Right lobe of liver (tissue), 6 donors: ENCODE measurements at regions of chr11 and their contacts with region 1.

Region 1: GRCh38 chr11:78659326-78660270 is 84.9 kb upstream of the NARS2 start:
- DNase-seq: peak; percentile 66 to 81 (median 69)
- ATAC-seq: peak; percentile 92 to 99 (median 97)
- H3K4me3 ChIP-seq: no peak overlapping the region
- H3K27ac ChIP-seq: no peak overlapping the region
- H3K4me1 ChIP-seq: peaks cover 0 to 4% (median 0%) of the 10 kb centered on the region in 4 donors
- H3K27me3 ChIP-seq: no peaks in the 10 kb centered on the region
- CTCF ChIP-seq: no peak
- POLR2A ChIP-seq: no peak

Region 2: DNA sequence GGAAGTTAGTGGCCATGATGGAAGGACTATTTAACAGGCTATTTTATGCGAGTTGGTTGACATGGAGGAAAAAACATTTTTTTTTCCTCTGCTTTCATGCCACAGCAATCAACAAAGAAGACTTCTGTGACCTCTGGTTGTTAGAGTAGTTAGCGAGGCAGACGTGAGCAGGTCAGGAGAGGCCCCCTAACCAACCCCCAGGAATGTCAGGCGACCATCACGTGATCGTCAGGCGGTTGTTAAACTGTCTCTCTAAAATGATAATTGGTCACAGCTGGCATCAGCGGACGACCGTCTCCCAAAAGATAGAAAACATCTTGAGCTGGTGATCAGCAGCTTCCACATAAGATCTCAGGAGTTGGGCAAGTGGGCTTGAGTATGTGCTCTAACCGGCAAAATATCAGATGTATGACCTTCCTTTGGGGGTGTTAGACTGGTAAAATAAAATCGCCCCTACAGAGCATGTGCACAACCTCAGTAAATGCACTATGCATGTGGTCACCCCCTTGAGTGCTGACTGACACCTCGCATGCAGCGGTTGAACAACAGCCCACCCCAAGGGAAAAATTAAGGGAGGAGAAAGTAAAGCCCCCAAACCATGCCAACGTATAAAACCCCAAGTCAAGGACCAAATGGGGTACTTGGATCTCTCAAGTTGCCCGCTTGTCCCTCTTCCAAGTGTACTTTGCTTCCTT is 64.0 kb before region 1 on chr11:
- intact Hi-C with region 1: no loop called
- DNase-seq: no peak
- ATAC-seq: no peak
- H3K4me3 ChIP-seq: no peak overlapping the region
- H3K27ac ChIP-seq: no peak overlapping the region
- H3K4me1 ChIP-seq: peaks cover 0 to 3% (median 0%) of the 10 kb centered on the region in 4 donors
- H3K27me3 ChIP-seq: no peaks in the 10 kb centered on the region
- CTCF ChIP-seq: no peak
- POLR2A ChIP-seq: no peak

Region 3: GRCh38 chr11:78715639-78716311 is 56.2 kb after region 1 on chr11:
- intact Hi-C with region 1: loop called in 1 of 2 experiments (anchors 10 kb)
- DNase-seq: peak; percentile 58 to 68 (median 63)
- ATAC-seq: peak; percentile 67 to 85 (median 84)
- H3K4me3 ChIP-seq: no peak overlapping the region
- H3K27ac ChIP-seq: no peak overlapping the region
- H3K4me1 ChIP-seq: no peaks in the 10 kb centered on the region
- H3K27me3 ChIP-seq: no peaks in the 10 kb centered on the region
- CTCF ChIP-seq: peak; percentile 65 to 82 (median 74)
- POLR2A ChIP-seq: no peak

Region 4: DNA sequence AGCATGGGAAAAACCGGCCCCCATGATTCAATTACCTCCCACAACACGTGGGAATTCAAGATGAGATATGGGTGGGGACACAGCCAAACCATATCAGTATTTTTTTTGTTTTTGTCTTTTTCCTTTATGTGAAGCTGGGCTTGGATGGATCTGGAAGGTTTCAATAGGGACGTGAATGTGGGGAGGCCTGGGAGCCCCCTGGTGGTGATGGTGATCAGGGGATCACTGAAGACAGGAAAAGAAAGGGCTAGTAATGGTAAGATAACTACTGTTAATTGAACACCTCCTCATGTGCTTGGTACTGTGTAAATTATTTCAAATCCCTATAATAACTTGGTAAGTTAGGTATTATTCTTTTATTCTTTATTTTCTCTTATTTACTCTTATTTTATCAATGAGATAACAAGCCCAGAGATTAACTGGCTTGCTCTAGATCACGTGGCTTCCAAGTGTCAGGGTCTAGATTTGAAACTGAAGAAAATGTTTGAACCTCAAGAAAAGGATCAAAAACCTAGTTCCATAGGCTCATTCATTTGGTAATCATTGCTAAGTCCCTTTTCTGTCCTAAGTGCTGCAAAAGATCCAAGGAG is 417.0 kb after region 1 on chr11:
- intact Hi-C with region 1: loop called (anchors 10 kb)
- DNase-seq: peak; percentile 63 to 67 (median 65)
- ATAC-seq: peak; percentile 85 to 93 (median 86)
- H3K4me3 ChIP-seq: no peak overlapping the region
- H3K27ac ChIP-seq: no peak overlapping the region
- H3K4me1 ChIP-seq: no peaks in the 10 kb centered on the region
- H3K27me3 ChIP-seq: no peaks in the 10 kb centered on the region
- CTCF ChIP-seq: peak; percentile 73 to 85 (median 76)
- POLR2A ChIP-seq: no peak

Region 5: DNA sequence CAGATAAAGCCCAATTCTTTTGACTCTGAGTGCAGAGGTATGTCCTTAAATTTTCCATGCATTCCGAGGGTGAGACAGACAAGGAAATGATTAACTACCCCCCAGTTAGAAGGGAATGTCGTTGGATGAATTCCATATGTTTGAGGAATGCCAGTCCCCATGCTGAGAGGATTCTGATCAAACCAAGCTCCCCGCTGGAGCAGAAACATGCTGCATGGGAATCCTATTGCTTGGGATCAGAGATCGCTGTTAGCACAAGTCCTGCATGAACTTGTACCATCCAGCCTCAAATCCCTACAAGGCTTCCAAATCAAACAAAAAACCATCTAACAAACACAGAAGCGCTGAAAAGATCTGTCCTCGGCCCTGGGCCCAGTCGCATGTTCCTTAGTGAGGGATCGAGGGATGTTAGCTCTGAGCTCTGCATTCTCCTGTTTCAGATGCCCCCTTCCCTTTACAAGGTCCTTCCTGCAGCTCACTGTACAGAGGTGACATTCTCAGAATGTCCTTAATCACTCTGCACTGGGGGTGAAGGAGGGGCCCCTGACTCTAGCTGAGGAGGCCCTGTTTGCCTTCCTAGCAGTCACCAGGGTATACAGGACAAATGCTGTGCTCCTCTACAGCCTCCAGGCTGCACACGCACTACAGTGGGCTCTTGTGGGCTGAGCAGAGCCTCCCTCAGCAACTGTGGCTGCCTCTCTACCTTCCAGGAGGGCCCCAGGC is 427.8 kb after region 1 on chr11:
- intact Hi-C with region 1: loop called in 1 of 2 experiments (anchors 10 kb)
- DNase-seq: no peak
- ATAC-seq: peak in 3 of 4 donors; percentile 17 to 49 (median 29)
- H3K4me3 ChIP-seq: no peak overlapping the region
- H3K27ac ChIP-seq: no peak overlapping the region
- H3K4me1 ChIP-seq: no peaks in the 10 kb centered on the region
- H3K27me3 ChIP-seq: no peaks in the 10 kb centered on the region
- CTCF ChIP-seq: no peak
- POLR2A ChIP-seq: no peak